Posterior vena cava (tissue), 2 donors: ENCODE measurements at regions of chr2 and their contacts with region 1.

Region 1: GRCh38 chr2:219851801-219852481 is 224.5 kb downstream of the SLC4A3 start:
- DNase-seq: no peak

Region 2: GRCh38 chr2:221731443-221732145 is 1879.7 kb after region 1 on chr2:
- intact Hi-C with region 1: loop called in 1 of 2 experiments (anchors 5 kb)
- DNase-seq: no peak